AG04449 (cell line): ENCODE measurements at regions of chr1 and their contacts with region 1.

Region 1: DNA sequence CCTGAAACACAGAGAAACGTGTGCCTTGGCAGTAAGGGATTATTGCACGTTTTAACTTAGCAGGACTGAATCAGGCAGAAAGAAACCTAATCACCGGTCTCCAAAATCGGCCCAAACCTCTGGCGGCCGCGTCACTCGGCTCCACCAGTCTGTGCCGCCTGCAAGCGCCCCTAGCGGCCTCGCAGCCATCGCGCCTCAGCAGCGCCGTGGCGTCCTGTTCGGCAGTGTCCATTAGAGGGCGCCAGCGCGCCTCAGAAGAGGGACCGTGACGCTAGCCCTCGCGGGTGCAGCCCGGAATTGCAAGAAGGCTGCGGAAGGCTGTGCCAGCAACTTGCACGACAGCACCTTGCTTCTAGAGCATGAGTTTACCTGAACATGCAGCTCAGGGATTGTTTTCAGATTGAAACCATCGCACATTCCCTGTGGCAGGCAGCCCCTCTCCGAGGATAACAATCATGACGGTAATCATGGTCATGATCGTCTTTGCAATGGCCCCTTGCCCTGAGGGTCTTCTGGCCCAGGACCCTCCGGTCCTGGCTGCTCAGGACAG is 164.4 kb downstream of the TRIM33 start:
- DNase-seq: peak; percentile 33
- H3K4me3 ChIP-seq: peak overlapping the region; percentile 42
- CTCF ChIP-seq: peak; percentile 100

Region 2: DNA sequence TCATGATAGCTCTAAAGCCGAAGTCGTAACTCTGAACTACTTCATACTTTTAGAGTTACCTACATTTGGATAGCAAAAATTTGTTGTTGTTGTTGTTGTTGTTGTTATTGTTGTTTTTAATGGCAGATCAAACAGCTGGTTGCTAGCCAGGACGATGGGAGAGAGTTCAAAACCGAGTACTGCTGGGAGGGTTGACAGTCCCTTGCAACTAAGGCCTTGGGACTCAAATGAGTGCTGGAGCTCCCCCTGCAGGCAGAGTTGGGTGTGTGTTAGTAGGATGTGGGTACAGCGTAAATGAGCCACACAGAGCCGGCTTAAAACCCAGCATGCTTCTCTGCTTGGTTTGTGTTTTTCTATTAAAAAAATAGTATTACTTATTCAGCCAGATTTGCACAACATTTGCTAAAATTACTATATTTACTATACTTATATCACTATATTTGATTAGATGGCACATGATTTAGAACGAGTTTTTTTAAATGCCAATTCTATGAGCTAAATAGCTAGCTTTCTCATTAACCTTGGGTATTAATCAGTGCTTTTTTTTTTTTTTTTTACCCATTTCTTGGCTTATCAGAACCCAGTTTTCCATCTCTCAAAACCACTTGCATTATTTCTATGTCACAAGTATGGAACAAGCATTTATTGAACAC is 63.7 kb before region 1 on chr1:
- CTCF ChIA-PET with region 1: interaction called, 23 read pairs
- POLR2A ChIA-PET with region 1: no interaction called
- DNase-seq: peak; percentile 49
- H3K4me3 ChIP-seq: no peak overlapping the region
- CTCF ChIP-seq: peak; percentile 94

Region 3: GRCh38 chr1:114330451-114330983 is 16.0 kb before region 1 on chr1:
- CTCF ChIA-PET with region 1: interaction called, 56 read pairs
- POLR2A ChIA-PET with region 1: no interaction called
- DNase-seq: no peak
- H3K4me3 ChIP-seq: no peak overlapping the region
- CTCF ChIP-seq: no peak

Region 4: DNA sequence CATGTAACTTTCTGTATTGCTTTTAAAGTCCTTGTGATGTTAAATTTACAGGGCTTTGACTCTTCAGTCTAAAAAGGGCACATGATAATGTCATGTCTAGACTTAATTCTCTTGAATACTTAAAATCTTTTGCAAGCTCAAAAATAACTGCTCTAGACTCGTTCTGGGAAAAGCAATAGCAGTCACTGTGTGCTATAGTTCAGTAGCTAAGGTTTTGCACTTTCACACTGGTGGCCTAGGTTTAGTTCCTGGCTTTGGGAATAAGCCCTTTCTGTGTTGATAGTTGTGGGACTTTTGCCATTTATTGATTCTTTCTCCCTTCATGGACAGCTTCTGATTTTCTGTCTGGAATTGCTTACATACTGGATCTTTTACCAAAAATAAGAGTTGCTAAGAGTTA is 13.2 kb after region 1 on chr1:
- CTCF ChIA-PET with region 1: interaction called, 31 read pairs
- POLR2A ChIA-PET with region 1: no interaction called
- DNase-seq: no peak
- H3K4me3 ChIP-seq: no peak overlapping the region
- CTCF ChIP-seq: no peak

Region 5: DNA sequence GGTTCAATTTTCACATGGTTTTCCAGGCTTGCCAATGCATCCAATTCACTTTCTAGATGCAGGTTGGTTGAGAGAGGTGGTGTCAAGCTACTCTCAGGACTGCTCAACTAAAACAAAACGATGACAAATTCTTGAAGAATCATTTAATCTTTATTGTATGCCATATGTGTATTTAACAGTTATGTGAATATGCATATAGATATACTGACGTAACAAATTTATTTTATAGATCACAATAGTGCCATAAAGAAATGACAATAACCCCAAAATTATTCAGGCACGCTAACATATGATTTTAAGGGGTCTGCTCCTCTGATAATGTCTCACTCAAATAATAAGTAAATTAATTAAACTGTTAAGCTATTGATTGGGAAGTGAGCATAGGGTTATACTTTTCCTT is 59.1 kb after region 1 on chr1:
- CTCF ChIA-PET with region 1: interaction called, 18 read pairs
- POLR2A ChIA-PET with region 1: no interaction called
- DNase-seq: no peak
- H3K4me3 ChIP-seq: no peak overlapping the region
- CTCF ChIP-seq: no peak

Region 6: DNA sequence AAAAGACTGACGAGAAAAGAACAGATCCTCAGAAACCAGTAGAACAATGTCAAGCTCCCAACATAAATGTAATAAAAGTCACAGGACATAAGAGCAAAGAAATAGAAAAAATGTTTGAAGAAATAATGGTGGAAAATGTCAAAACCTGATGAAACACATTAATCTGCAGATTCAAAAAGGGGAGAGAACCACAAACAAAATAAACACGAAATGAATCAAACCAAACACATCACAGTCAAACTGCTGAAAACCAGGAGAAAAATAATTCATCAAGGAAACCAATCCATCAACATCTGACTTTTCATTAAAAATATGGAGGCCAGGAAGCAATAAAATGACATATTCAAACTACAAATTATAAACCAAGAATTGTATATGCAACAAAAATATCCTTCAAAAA is 132.6 kb after region 1 on chr1:
- CTCF ChIA-PET with region 1: no interaction called
- POLR2A ChIA-PET with region 1: no interaction called
- DNase-seq: no peak
- H3K4me3 ChIP-seq: no peak overlapping the region
- CTCF ChIP-seq: no peak

Region 7: GRCh38 chr1:114670083-114671010 is 323.8 kb after region 1 on chr1:
- CTCF ChIA-PET with region 1: interaction called, 63 read pairs
- POLR2A ChIA-PET with region 1: no interaction called
- DNase-seq: peak; percentile 40
- H3K4me3 ChIP-seq: peak overlapping the region; percentile 79
- CTCF ChIP-seq: no peak